ENCODE measurements at regions of chr4 and their contacts with region 1.

Region 1: DNA sequence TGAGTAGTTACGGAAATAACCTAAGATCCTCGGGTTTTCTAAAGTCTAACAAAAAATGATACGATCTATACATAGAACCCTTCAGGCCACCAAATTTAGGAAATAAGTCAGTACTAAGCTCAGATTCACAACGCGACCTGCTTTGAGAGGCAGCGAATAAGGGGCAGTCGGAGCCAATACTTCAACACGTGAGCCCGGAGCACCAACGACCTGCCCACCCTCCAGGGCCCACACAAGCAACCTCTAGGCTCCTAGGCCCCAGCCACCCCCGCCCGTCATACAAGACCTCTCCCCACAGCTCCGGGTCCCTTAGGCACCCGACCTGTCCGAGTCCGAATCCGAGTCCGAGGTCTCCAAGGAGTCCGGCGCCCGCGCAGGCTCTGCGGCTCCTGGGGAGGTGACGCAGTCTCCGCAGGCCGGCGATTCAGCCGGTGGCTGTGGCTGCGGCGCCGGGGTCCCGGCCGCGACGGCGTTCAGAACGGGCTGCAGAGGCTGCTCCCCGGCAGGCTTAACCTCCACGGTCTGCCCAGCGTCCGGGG is 580 bp downstream of the NAF1 start:
- DNase-seq: no peak
- ATAC-seq: peak; percentile 78
- H3K4me3 ChIP-seq: peak overlapping the region; percentile 81 to 83
- H3K27ac ChIP-seq: peak overlapping the region; percentile 83
- H3K4me1 ChIP-seq: no peaks in the 10 kb centered on the region; the same call in 1 of the 2 replicates
- H3K27me3 ChIP-seq: no peaks in the 10 kb centered on the region
- CTCF ChIP-seq: no peak

Region 2: DNA sequence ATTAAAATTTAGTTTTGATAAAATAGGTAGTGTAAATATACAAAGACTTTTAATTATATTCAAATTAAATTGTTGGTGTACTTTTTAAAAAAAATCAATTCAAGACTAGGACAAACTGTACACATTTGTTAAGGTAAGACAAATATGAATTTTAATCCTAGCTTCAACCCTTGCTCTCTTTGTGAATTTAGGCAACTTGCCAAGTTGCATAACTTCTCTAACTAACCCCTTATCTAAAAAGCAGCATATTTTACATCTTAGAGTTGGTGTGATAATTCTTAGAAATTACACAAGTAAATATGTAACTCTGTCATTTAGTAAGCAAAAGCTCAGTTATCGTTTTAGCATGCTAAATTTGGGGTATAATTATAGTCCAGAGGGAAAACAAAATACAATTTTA is 924.3 kb before region 1 on chr4:
- CTCF ChIA-PET with region 1: no interaction called
- POLR2A ChIA-PET with region 1: no interaction called
- in situ Hi-C with region 1: no loop called
- intact Hi-C with region 1: no loop called
- DNase-seq: no peak
- ATAC-seq: no peak
- H3K4me3 ChIP-seq: no peak overlapping the region
- H3K27ac ChIP-seq: no peak overlapping the region
- H3K4me1 ChIP-seq: no peaks in the 10 kb centered on the region
- H3K27me3 ChIP-seq: no peaks in the 10 kb centered on the region
- CTCF ChIP-seq: no peak

Region 3: DNA sequence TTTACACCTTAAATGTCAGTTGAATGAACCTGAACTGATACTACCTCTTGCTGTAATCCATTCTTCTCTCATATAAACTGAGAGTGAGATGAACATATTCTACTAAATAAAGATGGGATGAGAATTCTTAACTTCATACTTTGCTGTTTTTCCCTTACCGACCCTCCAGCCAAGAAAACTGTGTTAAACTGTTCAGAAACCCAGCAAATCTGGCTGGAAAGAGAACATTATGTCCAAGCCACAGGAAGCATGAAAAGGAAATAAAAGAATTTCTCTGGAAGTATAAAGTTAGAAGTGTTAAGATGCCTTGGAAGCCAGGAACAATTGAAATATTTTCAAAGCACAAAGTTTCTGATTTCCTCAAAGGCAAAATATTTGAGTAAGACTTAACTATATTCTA is 143.4 kb after region 1 on chr4:
- CTCF ChIA-PET with region 1: interaction called, 11 read pairs
- POLR2A ChIA-PET with region 1: no interaction called
- in situ Hi-C with region 1: no loop called
- intact Hi-C with region 1: no loop called
- DNase-seq: no peak
- ATAC-seq: no peak
- H3K4me3 ChIP-seq: no peak overlapping the region
- H3K27ac ChIP-seq: no peak overlapping the region
- H3K4me1 ChIP-seq: no peaks in the 10 kb centered on the region
- H3K27me3 ChIP-seq: no peaks in the 10 kb centered on the region
- CTCF ChIP-seq: no peak

Measured in Panc1 (cell line).